IMR-90 (cell line): ENCODE measurements at regions of chr2 and their contacts with region 1.

Region 1: DNA sequence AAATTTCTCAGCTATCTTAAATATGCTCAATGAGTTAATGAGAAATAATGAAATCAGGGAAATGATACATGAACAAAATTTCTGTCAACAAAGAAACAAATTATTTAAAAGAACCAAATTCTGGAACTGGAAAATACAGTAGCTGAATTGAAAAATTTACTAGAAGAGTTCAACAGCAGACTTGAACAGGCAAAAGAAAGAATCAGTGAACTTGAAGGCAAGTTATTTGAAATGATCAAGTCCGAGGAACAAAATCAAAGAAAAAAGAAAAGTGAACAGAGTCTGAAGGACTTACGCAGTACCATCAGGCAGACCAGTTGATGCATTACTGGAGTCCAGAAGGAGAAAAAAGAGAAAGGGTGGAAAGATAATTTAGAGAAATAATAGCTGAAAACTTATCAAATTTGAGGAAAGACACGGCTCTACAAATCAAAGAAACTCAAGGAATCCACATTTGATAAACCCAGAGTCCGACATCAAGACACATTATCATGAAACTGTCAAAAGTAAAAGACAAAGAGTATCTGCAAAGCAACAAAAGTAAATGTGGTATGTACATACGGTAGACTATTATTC is 83.6 kb downstream of the CCDC138 start:
- DNase-seq: no peak
- ATAC-seq: no peak
- H3K4me3 ChIP-seq: no peak overlapping the region
- H3K27ac ChIP-seq: no peak overlapping the region
- H3K4me1 ChIP-seq: no peaks in the 10 kb centered on the region
- H3K27me3 ChIP-seq: no peaks in the 10 kb centered on the region
- CTCF ChIP-seq: no peak
- POLR2A ChIP-seq: no peak
- RAD21 ChIP-seq: no peak

Region 2: GRCh38 chr2:108922141-108922915 is 52.2 kb after region 1 on chr2:
- CTCF ChIA-PET with region 1: interaction called, 3 read pairs
- POLR2A ChIA-PET with region 1: no interaction called
- dilution Hi-C with region 1: no loop called
- in situ Hi-C with region 1: no loop called
- intact Hi-C with region 1: loop called (anchors 5 kb)
- DNase-seq: peak; percentile 22
- ATAC-seq: peak; percentile 61
- H3K4me3 ChIP-seq: no peak overlapping the region
- H3K27ac ChIP-seq: no peak overlapping the region
- H3K4me1 ChIP-seq: peaks cover 2% of the 10 kb centered on the region; the same call in 1 of the 2 replicates
- H3K27me3 ChIP-seq: peaks cover 86% of the 10 kb centered on the region
- CTCF ChIP-seq: no peak
- POLR2A ChIP-seq: no peak
- RAD21 ChIP-seq: no peak

Region 3: GRCh38 chr2:109726379-109727270 is 856.5 kb after region 1 on chr2:
- CTCF ChIA-PET with region 1: no interaction called
- POLR2A ChIA-PET with region 1: no interaction called
- dilution Hi-C with region 1: no loop called
- in situ Hi-C with region 1: no loop called
- intact Hi-C with region 1: no loop called
- DNase-seq: no peak
- ATAC-seq: no peak
- H3K4me3 ChIP-seq: no peak overlapping the region
- H3K27ac ChIP-seq: no peak overlapping the region
- H3K4me1 ChIP-seq: no peaks in the 10 kb centered on the region
- H3K27me3 ChIP-seq: peaks cover 40% of the 10 kb centered on the region
- CTCF ChIP-seq: no peak
- POLR2A ChIP-seq: no peak
- RAD21 ChIP-seq: no peak